Sigmoid colon (tissue), 7 donors: ENCODE measurements at regions of chr19 and their contacts with region 1.

Region 1: GRCh38 chr19:49473868-49474544 is at the start of gene FLT3LG:
- DNase-seq: peak; percentile 92
- H3K4me3 ChIP-seq: peak within 1 kb of the TSS; percentile 56 to 83 (median 71)
- H3K27ac ChIP-seq: peak within 1 kb of the TSS; percentile 77 to 84 (median 80)
- H3K4me1 ChIP-seq: peaks cover 0 to 27% (median 15%) of the 10 kb centered on the region in 4 donors
- H3K27me3 ChIP-seq: no peaks in the 10 kb centered on the region
- CTCF ChIP-seq: peak; percentile 96 to 100 (median 98)
- EP300 ChIP-seq: no peak
- POLR2A ChIP-seq: no peak
- total RNA-seq, gene FLT3LG: 4.6 to 11.1 (median 6.1) TPM

Region 2: DNA sequence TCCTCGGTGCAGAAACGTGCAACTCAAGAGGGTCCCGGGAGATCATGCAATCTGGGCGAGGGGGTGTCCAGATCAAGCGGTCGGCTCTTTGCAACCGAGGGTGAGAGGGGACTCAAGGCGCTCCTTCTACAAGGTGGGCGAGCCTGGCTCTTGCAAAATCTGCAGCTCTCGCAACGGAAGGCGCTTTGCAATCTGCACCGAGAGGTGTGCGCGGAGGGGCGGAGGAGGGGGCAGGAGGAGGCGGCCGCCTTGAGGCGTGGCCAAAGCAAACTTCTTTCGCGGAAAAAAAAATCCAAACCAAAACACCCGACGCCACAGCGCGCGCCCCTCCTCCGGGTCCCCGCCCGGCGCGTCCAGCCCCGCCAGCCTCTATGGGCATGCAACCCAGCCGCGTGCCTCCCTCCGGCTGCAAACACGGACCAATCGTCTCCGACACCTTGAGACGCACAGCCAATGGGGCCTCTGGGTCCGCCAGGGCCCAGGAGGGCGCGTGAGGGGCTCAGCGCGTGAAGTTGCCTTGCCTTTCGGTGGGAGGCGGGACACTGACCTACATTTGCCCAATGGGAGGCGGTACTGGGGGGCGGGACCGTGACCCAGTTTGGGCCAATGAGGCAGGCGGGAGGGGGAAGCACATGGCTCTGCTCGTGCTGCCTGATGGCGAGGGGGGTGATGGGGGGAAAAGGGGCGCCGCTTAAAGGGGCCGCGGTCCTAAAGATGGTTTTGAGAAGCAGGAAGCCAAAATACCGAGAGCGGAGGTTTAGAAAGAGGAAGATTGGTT is 836.6 kb before region 1 on chr19 and contains the start of gene DBP:
- intact Hi-C with region 1: loop called (anchors 10 kb)
- DNase-seq: peak; percentile 100
- H3K4me3 ChIP-seq: peak within 1 kb of the TSS; percentile 54 to 89 (median 64)
- H3K27ac ChIP-seq: peak within 1 kb of the TSS; percentile 91 to 99 (median 96)
- H3K4me1 ChIP-seq: peaks cover 0 to 52% (median 38%) of the 10 kb centered on the region in 4 donors
- H3K27me3 ChIP-seq: no peaks in the 10 kb centered on the region
- CTCF ChIP-seq: no peak
- EP300 ChIP-seq: peak in 1 of 4 donors; percentile 74
- POLR2A ChIP-seq: peak; percentile 70 to 74
- total RNA-seq, gene DBP: 10.5 to 14.1 (median 11.9) TPM

Region 3: DNA sequence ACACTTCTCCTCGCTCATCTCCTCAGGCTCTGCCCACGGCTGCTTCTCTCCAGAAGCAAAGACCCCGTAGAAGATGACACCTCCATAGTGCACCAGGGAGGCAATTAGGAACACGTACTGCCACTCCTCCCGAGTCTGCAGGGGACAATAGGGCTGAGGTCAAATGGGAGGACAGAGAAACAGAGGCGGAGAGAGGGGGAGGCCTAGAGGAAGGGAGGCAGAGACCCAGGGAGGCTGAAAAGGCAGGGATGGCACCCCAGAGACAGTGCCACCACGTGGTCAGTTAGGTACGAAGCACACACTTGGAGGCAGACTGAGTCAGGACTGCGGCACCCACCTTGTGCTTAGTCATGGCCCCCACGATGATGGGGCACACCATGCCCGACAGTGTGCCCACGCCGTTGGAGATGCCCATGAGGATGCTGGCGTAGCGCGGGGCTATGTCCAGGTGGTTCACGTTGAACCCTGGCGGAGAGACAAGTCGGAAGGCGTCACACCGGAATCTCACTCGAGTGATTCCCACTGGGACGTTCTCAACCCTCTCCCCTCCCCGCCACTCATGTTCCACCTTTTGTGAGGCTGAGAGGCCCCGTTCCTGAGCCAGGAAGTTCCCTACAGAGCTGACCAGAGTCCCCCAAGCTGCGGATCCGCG is 43.2 kb before region 1 on chr19:
- intact Hi-C with region 1: no loop called
- DNase-seq: no peak
- H3K4me3 ChIP-seq: no peak overlapping the region
- H3K27ac ChIP-seq: no peak overlapping the region
- H3K4me1 ChIP-seq: peaks cover 0 to 12% (median 10%) of the 10 kb centered on the region in 4 donors
- H3K27me3 ChIP-seq: peaks cover 76 to 100% (median 97%) of the 10 kb centered on the region in 3 donors
- CTCF ChIP-seq: no peak
- EP300 ChIP-seq: no peak
- POLR2A ChIP-seq: no peak

Region 4: GRCh38 chr19:49487277-49488045 is 13.5 kb after region 1 on chr19 and contains the start of gene RPL13A:
- intact Hi-C with region 1: no loop called
- DNase-seq: peak; percentile 100
- H3K4me3 ChIP-seq: peak within 1 kb of the TSS; percentile 70 to 96 (median 92)
- H3K27ac ChIP-seq: peak within 1 kb of the TSS; percentile 89 to 94 (median 92)
- H3K4me1 ChIP-seq: peaks cover 0 to 37% (median 27%) of the 10 kb centered on the region in 4 donors
- H3K27me3 ChIP-seq: no peaks in the 10 kb centered on the region
- CTCF ChIP-seq: no peak
- EP300 ChIP-seq: no peak
- POLR2A ChIP-seq: peak; percentile 100
- total RNA-seq, gene RPL13A: 2,552 to 5,599 (median 4,191) TPM